Activated CD8-positive, alpha-beta T cell treated with anti-CD3 and anti-CD28 coated beads for 36 hours (primary cell): ENCODE measurements at regions of chr12 and their contacts with region 1.

Region 1: GRCh38 chr12:121351820-121352681 is at the start of gene ANAPC5:
- DNase-seq: peak; percentile 95
- ATAC-seq: peak; percentile 98
- H3K4me3 Mint-ChIP-seq: peak within 1 kb of the TSS; percentile 93
- H3K27ac Mint-ChIP-seq: peak within 1 kb of the TSS; percentile 99
- H3K4me1 Mint-ChIP-seq: peaks cover 24% of the 10 kb centered on the region
- H3K27me3 Mint-ChIP-seq: no peaks in the 10 kb centered on the region
- CTCF ChIP-seq: no peak
- total RNA-seq, gene ANAPC5: 122 TPM

Region 2: GRCh38 chr12:121399391-121400331 is 47.6 kb after region 1 on chr12 and contains the start of gene RNF34:
- CTCF ChIA-PET with region 1: interaction called, 6 read pairs
- POLR2A ChIA-PET with region 1: interaction called, 47 read pairs
- intact Hi-C with region 1: loop called (anchors 2 kb)
- DNase-seq: peak; percentile 99
- ATAC-seq: peak; percentile 92
- H3K4me3 Mint-ChIP-seq: peak within 1 kb of the TSS; percentile 85
- H3K27ac Mint-ChIP-seq: peak within 1 kb of the TSS; percentile 93
- H3K4me1 Mint-ChIP-seq: peaks cover 26% of the 10 kb centered on the region
- H3K27me3 Mint-ChIP-seq: no peaks in the 10 kb centered on the region
- CTCF ChIP-seq: no peak
- total RNA-seq, gene RNF34: 44.1 to 44.9 TPM

Region 3: DNA sequence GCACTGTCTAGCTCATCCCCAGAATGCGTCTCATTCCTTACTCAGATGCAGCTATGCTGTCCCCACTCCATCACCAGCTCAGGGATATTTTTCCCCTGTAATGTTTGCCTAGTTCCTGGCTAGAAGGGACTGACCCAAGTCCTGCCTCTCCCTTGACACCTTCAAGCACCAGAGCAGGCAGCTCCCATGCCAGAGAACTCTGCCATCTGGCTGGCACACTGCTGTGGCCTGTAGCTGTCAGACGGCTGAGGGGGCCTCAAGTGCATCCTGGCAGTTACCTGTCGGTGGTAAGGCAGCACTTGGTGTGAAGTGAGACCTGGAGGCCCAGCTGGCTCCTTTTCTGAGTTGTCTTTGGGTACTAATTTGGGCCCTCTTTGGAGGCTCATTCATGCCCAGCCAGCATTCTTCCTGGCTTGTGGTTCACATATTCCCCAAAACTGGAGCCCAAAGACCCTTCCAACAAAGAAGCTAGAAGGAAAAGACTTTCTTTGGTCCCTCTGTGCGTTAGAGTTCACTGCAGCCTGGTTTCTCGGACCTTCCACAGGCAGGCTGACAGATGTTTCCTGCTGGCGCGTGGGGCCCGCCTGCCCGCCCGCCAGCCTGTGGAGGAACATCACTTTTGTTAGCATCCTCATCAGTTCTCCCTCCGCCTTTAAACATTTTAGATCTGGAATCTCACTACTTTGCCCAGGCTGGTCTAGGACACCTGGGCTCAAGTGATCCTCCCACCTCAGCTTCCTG is 80.9 kb after region 1 on chr12:
- CTCF ChIA-PET with region 1: no interaction called
- POLR2A ChIA-PET with region 1: no interaction called
- intact Hi-C with region 1: no loop called
- DNase-seq: no peak
- ATAC-seq: no peak
- H3K4me3 Mint-ChIP-seq: no peak overlapping the region
- H3K27ac Mint-ChIP-seq: peak overlapping the region; percentile 60
- H3K4me1 Mint-ChIP-seq: peaks cover 2% of the 10 kb centered on the region
- H3K27me3 Mint-ChIP-seq: no peaks in the 10 kb centered on the region
- CTCF ChIP-seq: no peak

Region 4: DNA sequence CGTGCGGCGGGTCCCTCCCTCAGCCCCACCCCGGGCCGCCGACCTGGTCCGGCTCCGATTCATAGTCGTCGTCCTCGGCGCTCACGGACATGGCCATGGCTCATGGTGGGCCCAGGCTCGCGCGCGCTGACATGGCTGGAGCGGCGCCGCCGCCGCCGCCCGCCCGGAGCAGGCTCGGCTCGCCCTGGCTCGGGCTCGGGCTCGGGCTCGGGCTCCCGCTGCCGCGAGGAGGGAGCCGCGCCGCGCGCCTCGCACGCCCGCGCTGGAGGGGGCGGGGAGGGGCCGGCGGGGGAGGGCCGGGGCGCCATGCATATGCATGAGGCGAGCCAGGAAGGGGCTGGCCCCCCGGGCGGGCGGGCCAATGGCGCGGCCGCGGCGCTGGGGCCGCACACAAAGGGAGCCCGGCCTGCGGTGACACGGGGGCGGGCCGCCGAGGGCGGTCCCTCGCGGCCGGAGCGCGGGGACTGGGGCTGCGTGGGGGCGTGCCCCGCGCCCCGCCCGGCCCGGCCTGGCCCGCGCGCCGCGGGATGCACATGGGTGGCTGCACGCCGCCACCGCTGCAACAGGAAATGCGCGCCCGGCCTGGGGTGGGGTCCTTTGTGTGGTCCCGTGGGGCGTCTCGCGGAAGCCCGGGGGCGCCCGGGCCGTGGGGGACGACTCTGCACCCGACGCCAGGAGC is 115.2 kb after region 1 on chr12:
- CTCF ChIA-PET with region 1: no interaction called
- POLR2A ChIA-PET with region 1: interaction called, 4 read pairs
- intact Hi-C with region 1: loop called (anchors 10 kb)
- DNase-seq: peak; percentile 90
- ATAC-seq: peak; percentile 92
- H3K4me3 Mint-ChIP-seq: peak overlapping the region; percentile 49
- H3K27ac Mint-ChIP-seq: no peak overlapping the region
- H3K4me1 Mint-ChIP-seq: peaks cover 26% of the 10 kb centered on the region
- H3K27me3 Mint-ChIP-seq: no peaks in the 10 kb centered on the region
- CTCF ChIP-seq: no peak